ENCODE measurements at regions of chr1 and their contacts with region 1.

Region 1: DNA sequence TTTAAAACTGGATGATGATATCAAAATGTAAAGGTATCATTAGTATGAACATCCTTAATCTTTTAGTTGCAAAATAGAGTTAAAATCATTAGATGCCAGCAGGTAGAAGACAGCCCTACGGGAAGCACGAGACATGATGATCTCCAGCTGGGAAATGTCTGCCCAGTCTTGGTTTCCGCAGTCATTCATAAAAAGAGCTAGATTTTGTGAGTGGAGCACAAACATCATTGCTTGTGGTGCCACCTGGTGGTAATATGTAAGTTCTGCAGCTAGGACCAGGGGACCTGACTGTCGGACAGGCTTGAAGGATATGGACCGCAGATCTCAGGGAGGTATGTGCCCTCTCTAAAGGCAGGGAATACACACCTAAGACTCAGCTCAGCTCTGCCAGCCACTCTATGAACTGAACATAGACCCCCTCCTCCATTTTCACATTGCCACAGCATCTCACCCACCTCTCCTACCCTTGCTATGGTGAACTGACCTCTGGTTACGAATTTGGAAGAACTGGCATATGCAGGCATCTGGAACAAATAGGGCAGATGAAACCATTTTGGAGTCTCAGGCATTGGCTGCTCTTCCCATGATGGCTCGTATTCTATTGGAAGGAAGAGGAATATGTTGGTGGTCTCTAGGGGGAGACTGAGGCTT is 9.2 kb downstream of the FCMR start:
- DNase-seq: peak; percentile 75
- H3K4me3 Mint-ChIP-seq: no peak overlapping the region
- H3K27ac Mint-ChIP-seq: peak overlapping the region; percentile 19
- H3K4me1 Mint-ChIP-seq: peaks cover 87% of the 10 kb centered on the region
- H3K27me3 Mint-ChIP-seq: no peaks in the 10 kb centered on the region

Region 2: GRCh38 chr1:206658264-206658980 is 254.1 kb before region 1 on chr1:
- CTCF ChIA-PET with region 1: interaction called, 23 read pairs
- POLR2A ChIA-PET with region 1: interaction called, 3 read pairs
- intact Hi-C with region 1: no loop called
- DNase-seq: peak; percentile 74
- H3K4me3 Mint-ChIP-seq: no peak overlapping the region
- H3K27ac Mint-ChIP-seq: no peak overlapping the region
- H3K4me1 Mint-ChIP-seq: peaks cover 20% of the 10 kb centered on the region
- H3K27me3 Mint-ChIP-seq: peaks cover 18% of the 10 kb centered on the region

Region 3: DNA sequence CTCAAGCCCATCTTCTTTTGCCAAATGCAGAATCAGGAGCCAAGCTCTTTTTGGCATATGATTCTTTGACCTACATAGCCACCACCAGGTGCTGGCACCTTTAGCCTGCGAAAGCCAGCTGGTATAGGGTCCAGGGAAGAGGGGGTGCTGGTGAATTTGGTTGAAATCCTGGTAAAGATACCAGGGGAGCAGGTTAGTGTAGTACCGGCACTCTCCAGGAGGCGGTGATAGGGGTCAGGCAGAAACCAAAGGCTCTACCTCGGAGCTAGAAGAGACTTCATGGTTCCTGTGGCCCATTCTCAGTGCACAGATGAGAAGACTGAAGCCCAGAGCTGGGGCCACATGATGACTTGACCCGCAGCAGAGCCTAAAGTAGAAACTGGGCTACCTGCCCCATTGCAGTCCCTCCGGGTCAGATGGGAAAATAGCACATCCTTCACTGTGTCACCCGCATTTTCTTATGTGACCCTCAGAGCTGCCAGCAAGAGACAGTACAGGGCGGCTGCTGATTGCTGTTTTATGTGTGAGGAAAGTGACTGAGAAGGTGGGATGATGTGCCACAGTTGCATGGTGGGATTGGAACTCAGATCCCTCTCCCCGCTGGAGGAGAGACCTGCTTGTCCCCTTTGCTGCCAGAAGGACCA is 177.9 kb before region 1 on chr1:
- CTCF ChIA-PET with region 1: interaction called, 190 read pairs
- POLR2A ChIA-PET with region 1: interaction called, 3 read pairs
- intact Hi-C with region 1: loop called (anchors 1 kb)
- DNase-seq: peak; percentile 85
- H3K4me3 Mint-ChIP-seq: no peak overlapping the region
- H3K27ac Mint-ChIP-seq: peak overlapping the region; percentile 16
- H3K4me1 Mint-ChIP-seq: peaks cover 57% of the 10 kb centered on the region
- H3K27me3 Mint-ChIP-seq: no peaks in the 10 kb centered on the region

Region 4: DNA sequence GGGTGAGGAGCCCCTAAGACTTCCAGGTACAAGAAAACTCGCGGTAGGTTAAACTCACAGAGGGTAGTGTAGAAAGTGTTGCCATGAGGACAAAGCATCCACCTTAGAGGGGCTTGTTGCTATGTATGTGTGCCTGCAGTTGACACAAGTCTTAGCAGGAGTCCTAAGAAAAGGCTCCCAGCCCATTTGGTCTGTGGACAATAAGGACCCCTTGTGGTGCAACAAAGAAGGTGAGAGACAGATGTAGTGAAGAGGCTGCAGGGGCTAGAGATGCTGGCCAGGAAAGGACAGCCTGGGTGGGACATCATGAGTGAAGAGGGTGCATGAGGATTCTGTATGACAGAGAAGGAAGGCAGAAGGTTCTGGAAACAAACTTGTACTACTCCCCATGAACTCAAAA is 104.0 kb before region 1 on chr1:
- CTCF ChIA-PET with region 1: interaction called, 111 read pairs
- POLR2A ChIA-PET with region 1: interaction called, 4 read pairs
- intact Hi-C with region 1: loop called (anchors 1 kb)
- DNase-seq: peak; percentile 66
- H3K4me3 Mint-ChIP-seq: no peak overlapping the region
- H3K27ac Mint-ChIP-seq: peak overlapping the region; percentile 3
- H3K4me1 Mint-ChIP-seq: peaks cover 45% of the 10 kb centered on the region
- H3K27me3 Mint-ChIP-seq: no peaks in the 10 kb centered on the region

Region 5: DNA sequence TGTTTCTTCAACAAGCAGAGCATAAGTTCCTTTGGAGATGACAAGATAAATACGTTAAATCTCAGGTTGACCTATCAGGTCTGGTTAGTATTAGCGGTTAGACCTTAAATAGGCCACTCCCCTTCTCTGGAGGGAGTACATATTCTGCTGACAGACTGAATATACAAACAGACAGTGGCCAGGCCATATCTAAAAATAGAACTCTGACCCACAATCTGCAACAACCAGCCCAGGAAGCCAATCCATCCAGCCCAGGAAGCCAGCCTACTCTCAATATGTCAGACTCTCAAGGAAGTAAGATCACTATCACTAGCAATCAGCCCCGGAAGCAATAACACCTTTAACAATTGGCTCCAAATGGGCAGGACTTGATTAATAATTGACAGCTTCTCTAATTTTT is 40.4 kb before region 1 on chr1:
- CTCF ChIA-PET with region 1: interaction called, 65 read pairs
- POLR2A ChIA-PET with region 1: no interaction called
- intact Hi-C with region 1: no loop called
- DNase-seq: no peak
- H3K4me3 Mint-ChIP-seq: no peak overlapping the region
- H3K27ac Mint-ChIP-seq: no peak overlapping the region
- H3K4me1 Mint-ChIP-seq: no peaks in the 10 kb centered on the region
- H3K27me3 Mint-ChIP-seq: peaks cover 8% of the 10 kb centered on the region

Region 6: GRCh38 chr1:206935491-206936067 is 23.0 kb after region 1 on chr1:
- CTCF ChIA-PET with region 1: interaction called, 201 read pairs
- POLR2A ChIA-PET with region 1: no interaction called
- intact Hi-C with region 1: loop called (anchors 1 kb)
- DNase-seq: peak; percentile 71
- H3K4me3 Mint-ChIP-seq: no peak overlapping the region
- H3K27ac Mint-ChIP-seq: no peak overlapping the region
- H3K4me1 Mint-ChIP-seq: peaks cover 15% of the 10 kb centered on the region
- H3K27me3 Mint-ChIP-seq: no peaks in the 10 kb centered on the region

Measured in activated CD4-positive, alpha-beta memory T cell treated with anti-CD3 and anti-CD28 coated beads for 36 hours (primary cell).